WTC11 (cell line): ENCODE measurements at regions of chr22 and their contacts with region 1.

Region 1: GRCh38 chr22:36757668-36758211 is 18.2 kb downstream of the IFT27 start:
- DNase-seq: peak; percentile 93
- ATAC-seq: peak; percentile 92
- H3K4me3 Mint-ChIP-seq: no peak overlapping the region
- H3K27ac Mint-ChIP-seq: no peak overlapping the region
- H3K4me1 Mint-ChIP-seq: no peaks in the 10 kb centered on the region
- H3K27me3 Mint-ChIP-seq: peaks cover 12% of the 10 kb centered on the region
- CTCF ChIP-seq: peak; percentile 88

Region 2: GRCh38 chr22:36546092-36546804 is 211.5 kb before region 1 on chr22:
- CTCF ChIA-PET with region 1: interaction called, 13 read pairs
- POLR2A ChIA-PET with region 1: no interaction called
- DNase-seq: peak; percentile 79
- ATAC-seq: peak; percentile 84
- H3K4me3 Mint-ChIP-seq: peak overlapping the region; percentile 44
- H3K27ac Mint-ChIP-seq: no peak overlapping the region
- H3K4me1 Mint-ChIP-seq: peaks cover 24% of the 10 kb centered on the region
- H3K27me3 Mint-ChIP-seq: peaks cover 14% of the 10 kb centered on the region
- CTCF ChIP-seq: peak; percentile 72

Region 3: DNA sequence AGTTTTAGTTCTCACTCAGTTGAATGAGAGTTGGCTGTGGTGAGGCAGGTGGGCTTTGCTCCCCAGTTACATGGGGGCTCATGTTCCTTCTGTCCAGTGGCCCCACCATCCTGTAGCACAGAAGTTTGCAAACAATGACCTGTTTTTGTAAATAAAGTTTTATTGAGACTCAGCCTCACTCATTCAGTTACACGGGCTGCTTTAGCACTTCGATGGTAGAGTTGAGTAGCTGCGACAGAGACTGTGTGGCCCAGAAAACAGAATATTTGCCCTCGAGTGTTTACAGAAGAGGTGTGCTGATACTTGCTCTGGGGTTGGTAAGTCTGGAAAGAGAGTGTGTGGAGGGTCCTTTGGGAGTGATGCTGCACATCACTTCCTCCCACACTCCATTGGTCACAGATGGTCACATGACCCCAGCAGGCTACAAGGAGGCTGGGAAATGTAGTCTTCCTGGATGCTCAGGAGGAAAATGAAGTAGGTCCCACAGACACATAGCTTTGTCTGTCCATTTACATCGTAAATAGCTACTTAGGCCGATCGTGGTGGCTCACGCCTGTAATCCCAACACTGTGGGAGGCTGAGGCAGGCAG is 16.4 kb before region 1 on chr22:
- CTCF ChIA-PET with region 1: interaction called, 20 read pairs
- POLR2A ChIA-PET with region 1: no interaction called
- DNase-seq: no peak
- ATAC-seq: peak; percentile 86
- H3K4me3 Mint-ChIP-seq: no peak overlapping the region
- H3K27ac Mint-ChIP-seq: no peak overlapping the region
- H3K4me1 Mint-ChIP-seq: no peaks in the 10 kb centered on the region
- H3K27me3 Mint-ChIP-seq: peaks cover 29% of the 10 kb centered on the region
- CTCF ChIP-seq: no peak

Region 4: GRCh38 chr22:36781656-36782627 is 24.2 kb after region 1 on chr22:
- CTCF ChIA-PET with region 1: interaction called, 10 read pairs
- POLR2A ChIA-PET with region 1: no interaction called
- DNase-seq: peak; percentile 91
- ATAC-seq: peak; percentile 93
- H3K4me3 Mint-ChIP-seq: no peak overlapping the region; the same call in none of the 2 replicates
- H3K27ac Mint-ChIP-seq: no peak overlapping the region
- H3K4me1 Mint-ChIP-seq: peaks cover 23% of the 10 kb centered on the region
- H3K27me3 Mint-ChIP-seq: peaks cover 40% of the 10 kb centered on the region
- CTCF ChIP-seq: peak; percentile 82

Region 5: GRCh38 chr22:36795633-36796032 is 37.9 kb after region 1 on chr22:
- CTCF ChIA-PET with region 1: no interaction called
- POLR2A ChIA-PET with region 1: no interaction called
- DNase-seq: no peak
- ATAC-seq: no peak
- H3K4me3 Mint-ChIP-seq: no peak overlapping the region
- H3K27ac Mint-ChIP-seq: no peak overlapping the region
- H3K4me1 Mint-ChIP-seq: peaks cover 43% of the 10 kb centered on the region
- H3K27me3 Mint-ChIP-seq: no peaks in the 10 kb centered on the region; the same call in 1 of the 2 replicates
- CTCF ChIP-seq: no peak

Region 6: DNA sequence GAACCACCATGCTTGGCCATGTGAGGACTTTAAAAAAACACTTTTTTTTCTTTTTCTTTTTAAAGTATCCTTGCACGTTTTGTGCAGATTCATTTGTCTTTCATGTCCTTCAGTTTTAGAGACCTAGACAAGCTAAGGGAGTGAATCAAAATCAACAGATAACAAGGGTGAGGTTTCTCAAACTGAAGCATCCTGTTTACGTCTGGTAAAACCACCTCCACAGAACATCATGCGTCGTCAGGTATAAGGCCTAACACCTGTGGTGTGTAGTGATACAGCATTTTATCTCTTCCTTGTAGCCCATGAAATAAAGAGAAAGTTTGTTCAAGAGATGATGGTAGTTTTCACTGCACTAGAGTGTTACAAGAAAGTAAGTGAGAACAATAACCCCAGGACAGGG is 129.4 kb after region 1 on chr22:
- CTCF ChIA-PET with region 1: no interaction called
- POLR2A ChIA-PET with region 1: no interaction called
- DNase-seq: no peak
- ATAC-seq: no peak
- H3K4me3 Mint-ChIP-seq: no peak overlapping the region
- H3K27ac Mint-ChIP-seq: no peak overlapping the region
- H3K4me1 Mint-ChIP-seq: peaks cover 15% of the 10 kb centered on the region
- H3K27me3 Mint-ChIP-seq: peaks cover 4% of the 10 kb centered on the region; the same call in 1 of the 2 replicates
- CTCF ChIP-seq: no peak